GM12878 (cell line): ENCODE measurements at regions of chrX and their contacts with region 1.

Region 1: DNA sequence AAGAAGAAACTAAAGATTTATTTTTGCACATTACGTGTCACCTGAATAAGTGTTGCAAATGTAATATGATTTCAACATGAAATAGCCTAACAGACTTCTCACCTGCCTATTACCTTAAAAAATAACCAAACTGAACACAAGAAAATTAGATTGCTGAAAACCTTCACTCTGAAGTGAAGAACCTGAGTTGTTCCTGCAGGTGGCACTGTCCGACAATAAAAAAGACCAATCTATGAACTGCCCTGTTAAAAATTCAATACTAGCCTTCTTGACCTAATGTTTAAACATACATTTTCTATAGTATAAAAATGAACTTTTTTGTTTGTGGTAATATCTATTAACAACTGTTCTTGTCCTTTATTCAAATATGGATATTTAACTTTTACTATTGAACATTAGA is 69.2 kb upstream of the PNPLA4 start:
- DNase-seq: no peak
- ATAC-seq: peak; percentile 91
- H3K4me3 ChIP-seq: no peak overlapping the region
- H3K27ac ChIP-seq: no peak overlapping the region
- H3K4me1 ChIP-seq: no peaks in the 10 kb centered on the region
- H3K27me3 ChIP-seq: no peaks in the 10 kb centered on the region
- CTCF ChIP-seq: peak; percentile 44 to 75 (median 54); a peak in 5 of 6 replicates
- EP300 ChIP-seq: no peak
- POLR2A ChIP-seq: no peak
- RAD21 ChIP-seq: peak; percentile 84

Region 2: GRCh38 chrX:8364369-8365141 is 368.1 kb after region 1 on chrX:
- CTCF ChIA-PET with region 1: no interaction called
- POLR2A ChIA-PET with region 1: no interaction called
- RAD21 ChIA-PET with region 1: no interaction called
- SMC1A ChIA-PET with region 1: no interaction called
- in situ Hi-C with region 1: no loop called
- intact Hi-C with region 1: loop called (anchors 5 kb)
- DNase-seq: no peak
- ATAC-seq: peak; percentile 81
- H3K4me3 ChIP-seq: no peak overlapping the region
- H3K27ac ChIP-seq: no peak overlapping the region
- H3K4me1 ChIP-seq: no peaks in the 10 kb centered on the region
- H3K27me3 ChIP-seq: no peaks in the 10 kb centered on the region
- CTCF ChIP-seq: peak; percentile 19 to 35 (median 33); a peak in 4 of 6 replicates
- EP300 ChIP-seq: no peak
- POLR2A ChIP-seq: no peak
- RAD21 ChIP-seq: no peak